IMR-90 (cell line): ENCODE measurements at regions of chr7 and their contacts with region 1.

Region 1: GRCh38 chr7:105141068-105141467 is 127.1 kb downstream of the KMT2E start:
- DNase-seq: peak; percentile 54
- ATAC-seq: peak; percentile 68
- H3K4me3 ChIP-seq: no peak overlapping the region
- H3K27ac ChIP-seq: no peak overlapping the region
- H3K4me1 ChIP-seq: peaks cover 4% of the 10 kb centered on the region
- H3K27me3 ChIP-seq: no peaks in the 10 kb centered on the region
- CTCF ChIP-seq: peak; percentile 44
- POLR2A ChIP-seq: no peak
- RAD21 ChIP-seq: peak; percentile 55

Region 2: GRCh38 chr7:105084581-105084980 is 56.5 kb before region 1 on chr7:
- CTCF ChIA-PET with region 1: no interaction called
- POLR2A ChIA-PET with region 1: no interaction called
- dilution Hi-C with region 1: no loop called
- in situ Hi-C with region 1: no loop called
- intact Hi-C with region 1: no loop called
- DNase-seq: no peak
- ATAC-seq: no peak
- H3K4me3 ChIP-seq: no peak overlapping the region
- H3K27ac ChIP-seq: no peak overlapping the region
- H3K4me1 ChIP-seq: no peaks in the 10 kb centered on the region
- H3K27me3 ChIP-seq: no peaks in the 10 kb centered on the region
- CTCF ChIP-seq: no peak
- POLR2A ChIP-seq: no peak
- RAD21 ChIP-seq: no peak

Region 3: DNA sequence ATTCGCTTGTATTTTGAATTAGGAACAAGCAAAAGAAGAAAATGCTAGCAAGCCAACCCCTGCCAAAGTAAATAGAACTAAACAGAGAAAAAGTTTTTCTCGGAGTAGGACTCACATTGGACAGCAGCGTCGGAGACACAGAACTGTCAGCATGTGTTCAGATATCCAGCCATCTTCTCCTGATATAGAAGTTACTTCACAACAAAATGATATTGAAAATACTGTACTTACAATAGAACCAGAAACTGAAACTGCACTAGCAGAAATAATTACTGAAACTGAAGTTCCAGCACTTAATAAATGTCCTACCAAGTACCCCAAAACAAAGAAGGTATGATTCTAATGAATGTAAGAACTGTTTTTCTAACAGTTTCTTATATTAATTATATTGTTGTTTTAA is 39.2 kb before region 1 on chr7:
- CTCF ChIA-PET with region 1: no interaction called
- POLR2A ChIA-PET with region 1: no interaction called
- dilution Hi-C with region 1: no loop called
- in situ Hi-C with region 1: no loop called
- intact Hi-C with region 1: no loop called
- DNase-seq: no peak
- ATAC-seq: no peak
- H3K4me3 ChIP-seq: no peak overlapping the region
- H3K27ac ChIP-seq: no peak overlapping the region
- H3K4me1 ChIP-seq: peaks cover 8% of the 10 kb centered on the region
- H3K27me3 ChIP-seq: no peaks in the 10 kb centered on the region
- CTCF ChIP-seq: no peak
- POLR2A ChIP-seq: no peak
- RAD21 ChIP-seq: no peak

Region 4: DNA sequence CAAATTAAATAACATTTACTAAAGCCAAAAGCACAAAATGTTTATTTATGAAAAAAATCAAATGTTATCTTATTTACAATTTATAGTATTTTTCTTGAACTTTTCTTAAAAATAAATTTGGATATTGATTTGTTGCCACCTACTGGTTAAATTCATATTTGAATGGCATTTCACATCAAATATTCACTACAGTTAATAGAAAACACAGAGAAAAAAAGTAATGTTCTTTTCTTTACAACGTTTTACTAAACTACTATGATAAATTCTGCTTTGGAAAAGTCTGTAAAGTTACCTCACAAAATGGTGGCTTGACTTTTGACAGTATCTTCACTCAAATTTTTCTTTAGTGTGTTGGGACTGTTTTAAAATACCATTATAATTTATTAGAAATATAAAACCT is 194.9 kb after region 1 on chr7:
- CTCF ChIA-PET with region 1: interaction called, 3 read pairs
- POLR2A ChIA-PET with region 1: no interaction called
- dilution Hi-C with region 1: no loop called
- in situ Hi-C with region 1: loop called (anchors 25 kb)
- intact Hi-C with region 1: loop called (anchors 5 kb)
- DNase-seq: peak; percentile 20
- ATAC-seq: no peak
- H3K4me3 ChIP-seq: no peak overlapping the region
- H3K27ac ChIP-seq: no peak overlapping the region
- H3K4me1 ChIP-seq: 0 out of 2 replicates have a peak, but pooled peaks cover 2% of the 10 kb centered on the region
- H3K27me3 ChIP-seq: no peaks in the 10 kb centered on the region
- CTCF ChIP-seq: peak; percentile 37
- POLR2A ChIP-seq: no peak
- RAD21 ChIP-seq: peak; percentile 21; the same call in 1 of the 2 replicates